ENCODE measurements at regions of chr10 and their contacts with region 1.

Region 1: GRCh38 chr10:5283305-5284158 is 81.2 kb upstream of the UCN3 start:
- DNase-seq: peak in 2 of 3 donors; percentile 73 to 75
- ATAC-seq: peak; percentile 95
- H3K4me3 ChIP-seq: no peak overlapping the region
- H3K4me1 ChIP-seq: no peaks in the 10 kb centered on the region
- CTCF ChIP-seq: peak; percentile 34

Region 2: GRCh38 chr10:5014936-5015335 is 268.6 kb before region 1 on chr10:
- intact Hi-C with region 1: loop called in 1 of 2 experiments (anchors 10 kb)
- DNase-seq: no peak
- ATAC-seq: peak; percentile 80
- H3K4me3 ChIP-seq: no peak overlapping the region
- H3K4me1 ChIP-seq: no peaks in the 10 kb centered on the region
- CTCF ChIP-seq: no peak

Region 3: GRCh38 chr10:5234106-5234860 is 49.2 kb before region 1 on chr10:
- intact Hi-C with region 1: no loop called
- DNase-seq: peak in 1 of 3 donors; percentile 64
- ATAC-seq: peak; percentile 94
- H3K4me3 ChIP-seq: no peak overlapping the region
- H3K4me1 ChIP-seq: no peaks in the 10 kb centered on the region
- CTCF ChIP-seq: no peak

Region 4: GRCh38 chr10:5385224-5385623 is 101.7 kb after region 1 on chr10:
- intact Hi-C with region 1: no loop called
- DNase-seq: no peak
- ATAC-seq: no peak
- H3K4me3 ChIP-seq: no peak overlapping the region
- H3K4me1 ChIP-seq: no peaks in the 10 kb centered on the region
- CTCF ChIP-seq: no peak

Region 5: DNA sequence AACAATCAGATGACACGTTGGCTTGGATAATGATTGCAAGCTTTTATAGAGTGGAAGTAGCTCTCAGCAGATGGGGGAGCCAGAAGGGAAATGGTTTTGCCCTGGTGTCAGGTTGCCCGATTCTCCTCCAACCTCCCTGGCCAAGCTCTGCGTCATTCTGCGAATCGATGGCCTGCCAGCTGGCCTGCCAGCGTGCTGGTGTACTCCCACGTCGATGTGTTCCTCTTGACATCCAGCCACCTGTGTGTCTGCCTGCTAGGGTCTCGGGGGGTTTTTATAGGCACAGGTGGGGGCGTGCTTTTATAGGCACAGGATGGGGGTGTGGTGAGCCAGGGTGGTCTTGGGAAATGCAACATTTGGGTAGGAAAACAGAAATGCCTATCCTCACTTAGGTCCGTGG is 133.4 kb after region 1 on chr10:
- intact Hi-C with region 1: no loop called
- DNase-seq: no peak
- ATAC-seq: no peak
- H3K4me3 ChIP-seq: no peak overlapping the region
- H3K4me1 ChIP-seq: peaks cover 2% of the 10 kb centered on the region
- CTCF ChIP-seq: no peak